Pancreas (tissue), 10 donors: ENCODE measurements at regions of chr1 and their contacts with region 1.

Region 1: DNA sequence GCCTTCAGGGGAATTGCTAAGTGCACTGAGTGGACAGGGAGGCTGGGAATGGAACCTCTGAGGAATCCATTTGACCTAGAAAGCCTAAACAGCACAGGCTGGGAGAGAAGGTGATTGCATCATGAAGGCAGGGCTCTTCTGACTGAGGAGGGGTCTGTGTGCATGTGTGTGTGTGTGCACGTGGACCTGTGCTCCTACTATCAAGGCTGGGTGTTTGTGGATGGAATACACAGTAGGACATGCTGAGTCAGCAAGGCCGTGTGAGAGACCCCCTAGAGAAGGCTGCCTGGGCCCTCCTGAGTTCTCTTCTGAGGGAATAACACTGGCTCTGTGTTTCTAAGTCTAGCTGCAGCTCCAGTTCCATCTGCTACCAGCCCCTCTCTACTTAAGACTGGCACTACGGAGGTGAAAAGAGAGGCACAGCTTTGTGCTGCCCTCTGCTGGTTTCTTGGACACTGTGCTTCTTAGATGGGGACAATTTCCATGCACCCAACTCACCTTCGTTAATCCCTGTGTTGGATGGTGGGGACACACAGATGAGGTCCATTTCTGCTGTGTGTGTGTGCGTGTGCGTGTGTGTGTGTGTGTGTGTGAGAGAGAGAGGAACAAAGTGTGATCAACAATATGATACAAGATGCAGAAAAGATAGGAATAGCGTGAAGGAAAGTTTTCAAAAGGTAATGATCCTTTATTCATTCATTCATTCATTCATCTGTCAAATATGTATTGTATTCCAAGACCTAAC is 6.2 kb upstream of the EFCAB14 start:
- DNase-seq: peak in 5 of 6 donors; percentile 55 to 78 (median 62)
- ATAC-seq: peak; percentile 92 to 100 (median 99)
- H3K4me3 ChIP-seq: no peak overlapping the region
- H3K27ac ChIP-seq: no peak overlapping the region
- H3K4me1 ChIP-seq: no peaks in the 10 kb centered on the region
- H3K27me3 ChIP-seq: no peaks in the 10 kb centered on the region
- CTCF ChIP-seq: peak; percentile 56 to 66 (median 62)

Region 2: GRCh38 chr1:46547481-46548383 is 177.4 kb before region 1 on chr1:
- intact Hi-C with region 1: loop called in 1 of 3 experiments (anchors 10 kb)
- DNase-seq: peak in 1 of 6 donors; percentile 61
- ATAC-seq: peak; percentile 43 to 80 (median 70)
- H3K4me3 ChIP-seq: no peak overlapping the region
- H3K27ac ChIP-seq: no peak overlapping the region
- H3K4me1 ChIP-seq: no peaks in the 10 kb centered on the region
- H3K27me3 ChIP-seq: no peaks in the 10 kb centered on the region
- CTCF ChIP-seq: peak in 1 of 4 donors; percentile 10

Region 3: GRCh38 chr1:46587069-46587468 is 138.1 kb before region 1 on chr1:
- intact Hi-C with region 1: no loop called
- DNase-seq: peak in 1 of 6 donors; percentile 48
- ATAC-seq: peak in 3 of 4 donors; percentile 34 to 69 (median 63)
- H3K4me3 ChIP-seq: no peak overlapping the region
- H3K27ac ChIP-seq: no peak overlapping the region
- H3K4me1 ChIP-seq: peaks cover 0 to 8% (median 0%) of the 10 kb centered on the region in 3 donors
- H3K27me3 ChIP-seq: no peaks in the 10 kb centered on the region
- CTCF ChIP-seq: no peak

Region 4: GRCh38 chr1:46622344-46622743 is 102.8 kb before region 1 on chr1:
- intact Hi-C with region 1: loop called in 2 of 3 experiments (anchors 5 to 10 kb)
- DNase-seq: no peak
- ATAC-seq: peak in 3 of 4 donors; percentile 68 to 84 (median 83)
- H3K4me3 ChIP-seq: no peak overlapping the region
- H3K27ac ChIP-seq: no peak overlapping the region
- H3K4me1 ChIP-seq: peaks cover 0 to 3% (median 0%) of the 10 kb centered on the region in 3 donors
- H3K27me3 ChIP-seq: no peaks in the 10 kb centered on the region
- CTCF ChIP-seq: peak in 2 of 4 donors; percentile 24 to 25

Region 5: DNA sequence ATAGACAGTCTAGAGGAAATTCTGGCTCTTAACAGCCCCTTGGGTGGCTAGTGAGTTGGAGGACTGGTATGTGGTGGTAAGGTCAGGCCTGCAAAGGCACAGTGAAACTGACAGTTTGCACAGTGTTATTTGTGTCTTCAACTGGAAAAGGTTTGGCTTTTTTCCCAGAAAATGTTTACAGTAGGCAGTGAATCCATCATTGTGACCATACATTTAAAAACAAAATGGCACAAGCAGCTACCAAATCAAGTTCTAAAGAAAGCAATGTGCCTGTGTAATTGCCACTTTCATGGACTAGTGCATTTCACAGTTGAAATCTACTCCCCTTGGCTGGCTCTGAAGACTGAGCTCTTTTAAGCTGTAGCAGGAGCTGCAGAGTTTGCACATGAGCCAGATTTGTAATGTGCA is 81.8 kb before region 1 on chr1:
- intact Hi-C with region 1: no loop called
- DNase-seq: no peak
- ATAC-seq: peak in 3 of 4 donors; percentile 75 to 81 (median 81)
- H3K4me3 ChIP-seq: no peak overlapping the region
- H3K27ac ChIP-seq: peak overlapping the region in 1 of 4 donors; percentile 17
- H3K4me1 ChIP-seq: peaks cover 0 to 23% (median 17%) of the 10 kb centered on the region in 3 donors
- H3K27me3 ChIP-seq: no peaks in the 10 kb centered on the region
- CTCF ChIP-seq: no peak